ENCODE measurements at regions of chr1 and their contacts with region 1.

Region 1: GRCh38 chr1:160951443-160952128 is 3.0 kb downstream of the ITLN2 start:
- DNase-seq: peak; percentile 81
- ATAC-seq: peak; percentile 81
- H3K4me3 ChIP-seq: no peak overlapping the region
- H3K4me3 Mint-ChIP-seq: no peak overlapping the region
- H3K27ac ChIP-seq: no peak overlapping the region
- H3K27ac Mint-ChIP-seq: no peak overlapping the region
- H3K4me1 ChIP-seq: peaks cover 0 to 4% of the 10 kb centered on the region in 2 donors
- H3K4me1 Mint-ChIP-seq: peaks cover 9% of the 10 kb centered on the region
- H3K27me3 ChIP-seq: no peaks in the 10 kb centered on the region
- H3K27me3 Mint-ChIP-seq: no peaks in the 10 kb centered on the region
- CTCF ChIP-seq: peak; percentile 85

Region 2: GRCh38 chr1:160567858-160568682 is 383.5 kb before region 1 on chr1:
- CTCF ChIA-PET with region 1: no interaction called
- POLR2A ChIA-PET with region 1: no interaction called
- intact Hi-C with region 1: no loop called
- DNase-seq: no peak
- ATAC-seq: peak; percentile 47
- H3K4me3 ChIP-seq: no peak overlapping the region
- H3K4me3 Mint-ChIP-seq: peak overlapping the region; percentile 27
- H3K27ac ChIP-seq: peak overlapping the region in 1 of 2 donors; percentile 54
- H3K27ac Mint-ChIP-seq: peak overlapping the region; percentile 77
- H3K4me1 ChIP-seq: peaks cover 16 to 33% of the 10 kb centered on the region in 2 donors
- H3K4me1 Mint-ChIP-seq: peaks cover 68% of the 10 kb centered on the region
- H3K27me3 ChIP-seq: no peaks in the 10 kb centered on the region
- H3K27me3 Mint-ChIP-seq: no peaks in the 10 kb centered on the region
- CTCF ChIP-seq: no peak

Region 3: DNA sequence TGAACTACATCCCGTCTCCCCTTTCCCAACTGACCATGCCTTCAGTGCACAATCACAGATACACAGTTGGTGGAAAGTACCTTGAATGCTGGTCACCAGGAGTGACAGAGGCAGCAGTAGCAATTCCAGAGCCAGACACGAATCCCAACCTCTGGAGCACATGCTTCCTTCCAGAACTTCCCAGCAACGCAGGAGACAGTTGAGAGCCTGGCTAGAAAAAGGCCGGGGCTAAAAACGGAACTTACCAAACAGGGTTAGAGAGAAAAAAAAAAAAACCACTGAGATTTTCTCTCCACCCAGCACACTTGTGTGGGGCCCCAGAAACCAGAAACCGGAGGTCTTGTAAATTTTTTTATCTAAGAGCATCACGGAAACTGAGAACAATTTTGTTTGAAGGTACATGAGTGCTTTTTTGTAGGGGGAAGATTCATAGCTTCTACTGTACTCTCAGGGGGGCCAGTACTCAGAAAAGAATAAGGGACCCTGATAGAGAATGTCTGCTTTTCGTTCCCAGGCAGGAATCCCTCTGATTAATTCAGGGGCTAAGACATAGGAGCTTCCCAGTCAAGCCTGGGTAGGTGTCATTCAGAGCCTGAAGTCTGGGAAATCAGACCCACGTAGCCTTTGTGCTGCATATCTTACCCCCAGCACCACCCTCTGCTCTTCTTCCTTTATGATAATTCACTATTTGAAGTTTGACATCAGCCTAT is 239.8 kb before region 1 on chr1 and contains the start of gene CD48:
- CTCF ChIA-PET with region 1: interaction called, 10 read pairs
- POLR2A ChIA-PET with region 1: no interaction called
- intact Hi-C with region 1: no loop called
- DNase-seq: peak; percentile 80
- ATAC-seq: peak; percentile 54
- H3K4me3 ChIP-seq: peak within 1 kb of the TSS; percentile 87 to 100 (median 98)
- H3K4me3 Mint-ChIP-seq: no peak within 1 kb of the TSS
- H3K27ac ChIP-seq: peak within 1 kb of the TSS; percentile 89 to 95
- H3K27ac Mint-ChIP-seq: no peak within 1 kb of the TSS
- H3K4me1 ChIP-seq: peaks cover 62 to 64% of the 10 kb centered on the region in 2 donors
- H3K4me1 Mint-ChIP-seq: peaks cover 26% of the 10 kb centered on the region
- H3K27me3 ChIP-seq: no peaks in the 10 kb centered on the region
- H3K27me3 Mint-ChIP-seq: no peaks in the 10 kb centered on the region
- CTCF ChIP-seq: no peak
- total RNA-seq, gene CD48: 252 and 255 TPM in 2 replicates

Region 4: GRCh38 chr1:160739098-160739511 is 212.5 kb before region 1 on chr1 and contains the start of gene SLAMF7:
- CTCF ChIA-PET with region 1: interaction called, 45 read pairs
- POLR2A ChIA-PET with region 1: no interaction called
- intact Hi-C with region 1: no loop called
- DNase-seq: peak; percentile 75
- ATAC-seq: peak; percentile 92
- H3K4me3 ChIP-seq: peak within 1 kb of the TSS in 4 of 5 experiments; percentile 9 to 50 (median 31)
- H3K4me3 Mint-ChIP-seq: peak within 1 kb of the TSS; percentile 91
- H3K27ac ChIP-seq: peak within 1 kb of the TSS; percentile 41 to 70
- H3K27ac Mint-ChIP-seq: peak within 1 kb of the TSS; percentile 87
- H3K4me1 ChIP-seq: peaks cover 25 to 39% of the 10 kb centered on the region in 2 donors
- H3K4me1 Mint-ChIP-seq: peaks cover 61% of the 10 kb centered on the region
- H3K27me3 ChIP-seq: no peaks in the 10 kb centered on the region
- H3K27me3 Mint-ChIP-seq: no peaks in the 10 kb centered on the region
- CTCF ChIP-seq: no peak
- total RNA-seq, gene SLAMF7: 51.6 and 52.6 TPM in 2 replicates

Region 5: GRCh38 chr1:160768295-160768657 is 183.3 kb before region 1 on chr1:
- CTCF ChIA-PET with region 1: interaction called, 23 read pairs
- POLR2A ChIA-PET with region 1: no interaction called
- intact Hi-C with region 1: loop called (anchors 5 kb)
- DNase-seq: peak; percentile 87
- ATAC-seq: peak; percentile 98
- H3K4me3 ChIP-seq: peak overlapping the region in 4 of 5 experiments; percentile 20 to 64 (median 43)
- H3K4me3 Mint-ChIP-seq: peak overlapping the region; percentile 83
- H3K27ac ChIP-seq: peak overlapping the region; percentile 39 to 68
- H3K27ac Mint-ChIP-seq: peak overlapping the region; percentile 85
- H3K4me1 ChIP-seq: peaks cover 11 to 18% of the 10 kb centered on the region in 2 donors
- H3K4me1 Mint-ChIP-seq: peaks cover 29% of the 10 kb centered on the region
- H3K27me3 ChIP-seq: no peaks in the 10 kb centered on the region
- H3K27me3 Mint-ChIP-seq: no peaks in the 10 kb centered on the region
- CTCF ChIP-seq: peak; percentile 74

Region 6: DNA sequence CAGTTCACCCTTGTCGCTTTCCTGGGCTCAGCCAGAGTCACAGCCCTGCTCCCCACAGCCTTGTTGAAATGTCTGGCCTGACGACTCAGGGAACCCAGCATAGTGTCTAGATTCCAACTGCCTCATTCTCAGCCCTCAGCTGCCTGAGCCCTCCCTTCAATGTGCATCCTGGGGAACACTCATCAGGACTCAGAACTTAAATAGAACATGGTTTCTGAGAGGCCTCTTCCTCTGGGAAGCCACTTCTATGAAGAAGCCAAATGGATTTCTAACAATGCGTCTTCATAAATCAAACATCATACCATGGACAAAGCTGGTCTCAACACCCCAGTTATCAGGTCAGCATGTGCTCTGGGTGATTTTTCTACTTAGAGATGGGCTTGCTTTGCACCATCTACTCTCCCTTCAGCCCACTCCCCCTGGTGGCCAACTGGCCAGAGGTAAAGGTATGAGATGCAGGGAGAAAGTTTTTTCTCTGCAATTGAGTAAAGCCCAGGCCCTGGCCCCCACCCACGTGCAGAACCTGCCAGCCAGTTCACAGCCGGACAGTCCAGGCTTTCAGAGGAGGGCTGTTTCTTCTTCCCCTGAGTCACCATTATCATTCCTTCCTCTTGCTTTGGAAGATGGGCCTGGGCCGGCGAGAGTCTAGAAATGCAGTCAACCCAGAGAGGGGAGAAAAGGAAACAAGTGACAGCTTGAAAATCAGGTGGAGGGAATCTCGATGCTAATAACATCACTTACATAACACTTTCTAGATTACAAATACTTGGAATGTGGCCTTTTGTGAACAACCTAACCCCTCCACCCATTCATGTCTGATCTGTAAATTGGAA is 121.0 kb before region 1 on chr1:
- CTCF ChIA-PET with region 1: interaction called, 111 read pairs
- POLR2A ChIA-PET with region 1: no interaction called
- intact Hi-C with region 1: loop called (anchors 1 kb)
- DNase-seq: peak; percentile 84
- ATAC-seq: peak; percentile 74
- H3K4me3 ChIP-seq: no peak overlapping the region
- H3K4me3 Mint-ChIP-seq: no peak overlapping the region
- H3K27ac ChIP-seq: peak overlapping the region in 1 of 2 donors; percentile 14
- H3K27ac Mint-ChIP-seq: peak overlapping the region; percentile 77
- H3K4me1 ChIP-seq: no peaks in the 10 kb centered on the region
- H3K4me1 Mint-ChIP-seq: peaks cover 10% of the 10 kb centered on the region
- H3K27me3 ChIP-seq: no peaks in the 10 kb centered on the region
- H3K27me3 Mint-ChIP-seq: no peaks in the 10 kb centered on the region
- CTCF ChIP-seq: peak; percentile 83

Region 7: GRCh38 chr1:160844447-160845232 is 106.9 kb before region 1 on chr1:
- CTCF ChIA-PET with region 1: interaction called, 21 read pairs
- POLR2A ChIA-PET with region 1: no interaction called
- intact Hi-C with region 1: no loop called
- DNase-seq: no peak
- ATAC-seq: no peak
- H3K4me3 ChIP-seq: no peak overlapping the region
- H3K4me3 Mint-ChIP-seq: no peak overlapping the region
- H3K27ac ChIP-seq: no peak overlapping the region
- H3K27ac Mint-ChIP-seq: no peak overlapping the region
- H3K4me1 ChIP-seq: peaks cover 4 to 6% of the 10 kb centered on the region in 2 donors
- H3K4me1 Mint-ChIP-seq: peaks cover 4% of the 10 kb centered on the region
- H3K27me3 ChIP-seq: no peaks in the 10 kb centered on the region
- H3K27me3 Mint-ChIP-seq: peaks cover 5% of the 10 kb centered on the region
- CTCF ChIP-seq: no peak

Measured in B cell (primary cell).